Activated CD4-positive, alpha-beta T cell treated with anti-CD3 and anti-CD28 coated beads for 36 hours (primary cell): ENCODE measurements at regions of chr4 and their contacts with region 1.

Region 1: GRCh38 chr4:39527273-39528060 is at the start of gene UGDH:
- DNase-seq: peak; percentile 95
- ATAC-seq: peak; percentile 99
- H3K4me3 Mint-ChIP-seq: peak within 1 kb of the TSS; percentile 87
- H3K27ac Mint-ChIP-seq: peak within 1 kb of the TSS; percentile 97
- H3K4me1 Mint-ChIP-seq: peaks cover 16% of the 10 kb centered on the region
- H3K27me3 Mint-ChIP-seq: no peaks in the 10 kb centered on the region
- total RNA-seq, gene UGDH: 30.2 to 31.3 TPM

Region 2: GRCh38 chr4:39044364-39044955 is 483.0 kb before region 1 on chr4:
- CTCF ChIA-PET with region 1: no interaction called
- POLR2A ChIA-PET with region 1: no interaction called
- intact Hi-C with region 1: loop called in 1 of 2 experiments (anchors 5 kb)
- DNase-seq: peak; percentile 99
- ATAC-seq: peak; percentile 87
- H3K4me3 Mint-ChIP-seq: peak overlapping the region; percentile 76
- H3K27ac Mint-ChIP-seq: peak overlapping the region; percentile 69
- H3K4me1 Mint-ChIP-seq: peaks cover 48% of the 10 kb centered on the region
- H3K27me3 Mint-ChIP-seq: no peaks in the 10 kb centered on the region

Region 3: GRCh38 chr4:39134683-39135319 is 392.7 kb before region 1 on chr4:
- CTCF ChIA-PET with region 1: no interaction called
- POLR2A ChIA-PET with region 1: no interaction called
- intact Hi-C with region 1: no loop called
- DNase-seq: no peak
- ATAC-seq: no peak
- H3K4me3 Mint-ChIP-seq: no peak overlapping the region
- H3K27ac Mint-ChIP-seq: no peak overlapping the region
- H3K4me1 Mint-ChIP-seq: peaks cover 9% of the 10 kb centered on the region
- H3K27me3 Mint-ChIP-seq: no peaks in the 10 kb centered on the region

Region 4: GRCh38 chr4:39365830-39366771 is 161.4 kb before region 1 on chr4 and contains the start of gene RFC1:
- CTCF ChIA-PET with region 1: no interaction called
- POLR2A ChIA-PET with region 1: interaction called, 6 read pairs
- intact Hi-C with region 1: loop called in 1 of 2 experiments (anchors 2 kb)
- DNase-seq: peak; percentile 97
- ATAC-seq: peak; percentile 90
- H3K4me3 Mint-ChIP-seq: peak within 1 kb of the TSS; percentile 98
- H3K27ac Mint-ChIP-seq: peak within 1 kb of the TSS; percentile 97
- H3K4me1 Mint-ChIP-seq: peaks cover 32% of the 10 kb centered on the region
- H3K27me3 Mint-ChIP-seq: no peaks in the 10 kb centered on the region
- total RNA-seq, gene RFC1: 112 to 216 TPM

Region 5: GRCh38 chr4:39621582-39621981 is 94.1 kb after region 1 on chr4:
- CTCF ChIA-PET with region 1: no interaction called
- POLR2A ChIA-PET with region 1: no interaction called
- intact Hi-C with region 1: loop called in 1 of 2 experiments (anchors 5 kb)
- DNase-seq: no peak
- ATAC-seq: no peak
- H3K4me3 Mint-ChIP-seq: no peak overlapping the region
- H3K27ac Mint-ChIP-seq: no peak overlapping the region
- H3K4me1 Mint-ChIP-seq: peaks cover 15% of the 10 kb centered on the region
- H3K27me3 Mint-ChIP-seq: no peaks in the 10 kb centered on the region

Region 6: GRCh38 chr4:39697740-39698423 is 170.4 kb after region 1 on chr4 and contains the start of gene UBE2K:
- CTCF ChIA-PET with region 1: no interaction called
- POLR2A ChIA-PET with region 1: no interaction called
- intact Hi-C with region 1: loop called (anchors 1 kb)
- DNase-seq: peak; percentile 93
- ATAC-seq: peak; percentile 87
- H3K4me3 Mint-ChIP-seq: peak within 1 kb of the TSS; percentile 99
- H3K27ac Mint-ChIP-seq: peak within 1 kb of the TSS; percentile 99
- H3K4me1 Mint-ChIP-seq: peaks cover 28% of the 10 kb centered on the region
- H3K27me3 Mint-ChIP-seq: no peaks in the 10 kb centered on the region
- total RNA-seq, gene UBE2K: 87.2 to 122 TPM